Calu3 (cell line): ENCODE measurements at regions of chr15 and their contacts with region 1.

Region 1: GRCh38 chr15:74438721-74439316 is 5.1 kb upstream of the SEMA7A start:
- DNase-seq: peak; percentile 87
- H3K4me3 Mint-ChIP-seq: no peak overlapping the region
- H3K27ac Mint-ChIP-seq: peak overlapping the region; percentile 58
- H3K4me1 Mint-ChIP-seq: peaks cover 16% of the 10 kb centered on the region
- H3K27me3 Mint-ChIP-seq: no peaks in the 10 kb centered on the region
- CTCF ChIP-seq: peak; percentile 91

Region 2: GRCh38 chr15:74382004-74382816 is 56.6 kb before region 1 on chr15:
- CTCF ChIA-PET with region 1: interaction called, 23 read pairs
- intact Hi-C with region 1: loop called (anchors 1 kb)
- DNase-seq: peak; percentile 98
- H3K4me3 Mint-ChIP-seq: no peak overlapping the region
- H3K27ac Mint-ChIP-seq: peak overlapping the region; percentile 90
- H3K4me1 Mint-ChIP-seq: peaks cover 76% of the 10 kb centered on the region
- H3K27me3 Mint-ChIP-seq: no peaks in the 10 kb centered on the region
- CTCF ChIP-seq: peak; percentile 99

Region 3: GRCh38 chr15:74396445-74397238 is 42.2 kb before region 1 on chr15:
- CTCF ChIA-PET with region 1: no interaction called
- intact Hi-C with region 1: loop called (anchors 1 kb)
- DNase-seq: peak; percentile 91
- H3K4me3 Mint-ChIP-seq: peak overlapping the region; percentile 52
- H3K27ac Mint-ChIP-seq: peak overlapping the region; percentile 98
- H3K4me1 Mint-ChIP-seq: peaks cover 77% of the 10 kb centered on the region
- H3K27me3 Mint-ChIP-seq: no peaks in the 10 kb centered on the region
- CTCF ChIP-seq: no peak